Lower leg skin (tissue), 4 donors: ENCODE measurements at regions of chr16 and their contacts with region 1.

Region 1: GRCh38 chr16:3400779-3401688 is at the starts of genes ZNF174 and ZSCAN32:
- DNase-seq: peak; percentile 99
- H3K4me3 ChIP-seq: peak within 1 kb of the TSS; percentile 82
- CTCF ChIP-seq: no peak
- POLR2A ChIP-seq: peak in 1 of 2 donors; percentile 12
- total RNA-seq, gene ZNF174: 12.3 to 16.4 (median 13.4) TPM
- total RNA-seq, gene ZSCAN32: 8.2 to 16.4 (median 11.7) TPM

Region 2: DNA sequence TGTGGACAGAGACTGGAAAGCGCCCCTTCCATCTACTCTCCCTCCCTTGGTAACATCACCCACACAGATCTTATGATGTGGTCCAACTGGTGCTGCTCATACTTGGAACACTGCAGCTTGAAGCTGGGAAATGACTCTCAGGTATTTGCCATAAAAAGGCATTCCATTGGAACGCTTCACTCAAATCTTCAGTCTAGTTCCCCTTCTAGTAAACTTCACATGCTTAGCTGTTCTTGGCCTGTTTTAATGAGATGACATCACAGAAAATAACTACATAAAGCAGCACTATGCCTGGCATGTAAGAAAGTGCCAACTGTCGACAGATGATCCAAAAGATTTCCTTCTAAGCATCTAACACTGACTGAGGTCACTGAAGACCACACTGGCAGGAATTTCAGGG is 108.4 kb before region 1 on chr16:
- intact Hi-C with region 1: no loop called
- DNase-seq: no peak
- H3K4me3 ChIP-seq: no peak overlapping the region
- CTCF ChIP-seq: no peak
- POLR2A ChIP-seq: no peak

Region 3: GRCh38 chr16:3305109-3306068 is 95.6 kb before region 1 on chr16 and contains the starts of genes TIGD7 and ZNF75A:
- intact Hi-C with region 1: loop called (anchors 10 kb)
- DNase-seq: peak; percentile 60 to 95
- H3K4me3 ChIP-seq: peak within 1 kb of the TSS; percentile 48
- CTCF ChIP-seq: no peak
- POLR2A ChIP-seq: peak in 1 of 2 donors; percentile 13
- total RNA-seq, gene TIGD7: 1.9 to 6.9 (median 3.0) TPM
- total RNA-seq, gene ZNF75A: 13.3 to 23.5 (median 18.2) TPM

Region 4: DNA sequence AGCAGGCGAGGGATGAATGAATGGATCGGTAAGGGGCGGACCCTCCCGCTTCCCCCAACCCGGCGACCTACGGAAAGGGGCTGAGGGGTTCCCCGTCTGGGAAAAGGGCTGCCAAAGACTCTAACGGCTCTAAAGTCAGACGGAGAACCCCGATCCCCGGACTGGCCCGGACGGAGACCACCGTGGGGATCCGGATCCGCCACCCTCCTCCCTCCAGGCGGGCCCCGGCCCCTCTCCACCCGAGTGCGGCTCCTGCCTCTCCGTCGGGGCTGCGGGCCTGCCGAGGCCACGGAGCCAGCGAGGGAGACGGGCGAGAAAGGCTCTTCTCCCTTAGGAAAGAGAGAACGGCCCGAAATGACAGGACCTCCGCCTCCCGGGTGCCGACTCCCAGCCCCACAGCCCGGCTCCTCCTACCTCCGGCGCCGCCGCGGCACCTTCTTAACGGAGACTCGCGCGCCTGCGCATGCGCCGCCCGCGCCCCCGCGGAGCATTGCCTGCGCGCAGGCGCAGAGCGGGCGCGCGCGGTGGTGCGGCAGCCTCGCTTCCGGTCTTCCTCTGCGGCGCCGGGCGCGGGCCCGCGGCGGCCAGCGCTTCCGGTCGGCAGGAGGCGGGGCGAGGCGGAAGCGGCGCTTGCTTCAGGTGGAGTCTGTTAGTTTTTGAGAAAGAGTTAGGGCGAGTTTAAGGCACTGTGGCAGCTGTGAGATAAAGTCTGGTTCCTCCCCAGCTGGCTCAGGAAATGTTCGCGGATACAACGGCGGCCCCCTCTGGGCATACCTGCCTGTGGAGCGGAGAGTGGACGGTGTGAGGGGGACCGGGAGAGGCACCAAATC is 210.3 kb after region 1 on chr16 and contains the start of gene SLX4:
- intact Hi-C with region 1: no loop called
- DNase-seq: peak; percentile 78 to 96
- H3K4me3 ChIP-seq: peak within 1 kb of the TSS; percentile 97
- CTCF ChIP-seq: no peak
- POLR2A ChIP-seq: no peak
- total RNA-seq, gene SLX4: 1.2 to 2.6 (median 2.5) TPM